CD4-positive, alpha-beta memory T cell (primary cell): ENCODE measurements at regions of chr1 and their contacts with region 1.

Region 1: GRCh38 chr1:89855413-89856123 is 34.7 kb downstream of the LRRC8D start:
- DNase-seq: peak; percentile 65 to 82 (median 77)
- H3K4me3 ChIP-seq: peak overlapping the region in 1 of 2 donors; percentile 21
- H3K4me3 Mint-ChIP-seq: peak overlapping the region in 3 of 8 donors; percentile 74 to 82 (median 77)
- H3K27ac ChIP-seq: peak overlapping the region; percentile 65
- H3K27ac Mint-ChIP-seq: no peak overlapping the region
- H3K4me1 ChIP-seq: peaks cover 44% of the 10 kb centered on the region
- H3K4me1 Mint-ChIP-seq: peaks cover 11 to 22% (median 14%) of the 10 kb centered on the region in 4 donors
- H3K27me3 ChIP-seq: no peaks in the 10 kb centered on the region
- H3K27me3 Mint-ChIP-seq: peaks cover 0 to 1% of the 10 kb centered on the region in 2 donors

Region 2: GRCh38 chr1:89820422-89821321 is 34.9 kb before region 1 on chr1 and contains the start of gene LRRC8D:
- CTCF ChIA-PET with region 1: no interaction called
- POLR2A ChIA-PET with region 1: interaction called, 4 read pairs
- intact Hi-C with region 1: loop called (anchors 5 kb)
- DNase-seq: peak; percentile 54 to 78 (median 63)
- H3K4me3 ChIP-seq: peak within 1 kb of the TSS; percentile 44 to 60
- H3K4me3 Mint-ChIP-seq: peak within 1 kb of the TSS; percentile 87 to 92 (median 90)
- H3K27ac ChIP-seq: peak within 1 kb of the TSS; percentile 65
- H3K27ac Mint-ChIP-seq: peak within 1 kb of the TSS; percentile 85 to 92 (median 88)
- H3K4me1 ChIP-seq: peaks cover 11% of the 10 kb centered on the region
- H3K4me1 Mint-ChIP-seq: peaks cover 23 to 32% (median 25%) of the 10 kb centered on the region in 4 donors
- H3K27me3 ChIP-seq: no peaks in the 10 kb centered on the region
- H3K27me3 Mint-ChIP-seq: no peaks in the 10 kb centered on the region
- total RNA-seq, gene LRRC8D: 56.8 to 63.2 TPM

Region 3: DNA sequence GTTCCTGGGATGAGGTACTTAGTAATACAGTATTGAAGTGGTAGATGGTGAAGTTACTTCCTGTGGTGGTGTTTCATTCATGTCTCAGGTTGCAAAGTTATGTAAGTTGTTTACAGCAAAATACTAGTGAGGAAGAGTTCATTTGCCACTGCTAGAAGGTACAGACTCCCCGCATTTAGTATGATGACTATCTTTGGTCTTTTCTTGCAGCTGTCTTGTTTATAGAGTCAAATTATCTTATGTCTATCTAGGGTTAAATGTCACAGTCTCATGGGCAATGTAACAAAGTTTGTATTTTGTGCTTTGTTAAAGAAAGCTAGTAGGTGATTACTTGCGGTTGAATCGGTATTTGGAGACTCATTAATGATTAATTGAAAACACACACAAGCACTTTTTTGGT is 15.4 kb after region 1 on chr1:
- CTCF ChIA-PET with region 1: interaction called, 3 read pairs
- POLR2A ChIA-PET with region 1: interaction called, 8 read pairs
- intact Hi-C with region 1: loop called (anchors 1 kb)
- DNase-seq: peak in 4 of 5 donors; percentile 54 to 68 (median 60)
- H3K4me3 ChIP-seq: no peak overlapping the region
- H3K4me3 Mint-ChIP-seq: peak overlapping the region in 7 of 8 donors; percentile 18 to 76 (median 44)
- H3K27ac ChIP-seq: no peak overlapping the region
- H3K27ac Mint-ChIP-seq: peak overlapping the region; percentile 67 to 96 (median 94)
- H3K4me1 ChIP-seq: peaks cover 55% of the 10 kb centered on the region
- H3K4me1 Mint-ChIP-seq: peaks cover 49 to 79% (median 60%) of the 10 kb centered on the region in 4 donors
- H3K27me3 ChIP-seq: no peaks in the 10 kb centered on the region
- H3K27me3 Mint-ChIP-seq: no peaks in the 10 kb centered on the region